Psoas muscle (tissue), 8 donors: ENCODE measurements at regions of chr14 and their contacts with region 1.

Region 1: GRCh38 chr14:50860478-50861086 is 11.3 kb upstream of the ABHD12B start:
- DNase-seq: peak; percentile 75 to 84
- ATAC-seq: peak; percentile 60 to 91 (median 76)
- H3K4me3 ChIP-seq: peak overlapping the region; percentile 77
- H3K27ac ChIP-seq: peak overlapping the region; percentile 83
- H3K4me1 ChIP-seq: peaks cover 20% of the 10 kb centered on the region
- H3K27me3 ChIP-seq: no peaks in the 10 kb centered on the region
- CTCF ChIP-seq: peak; percentile 83

Region 2: GRCh38 chr14:50830932-50831725 is 29.5 kb before region 1 on chr14 and contains the start of gene NIN:
- intact Hi-C with region 1: loop called in 1 of 2 experiments (anchors 2 kb)
- DNase-seq: peak; percentile 82 to 89
- ATAC-seq: peak; percentile 93 to 96 (median 94)
- H3K4me3 ChIP-seq: peak within 1 kb of the TSS; percentile 94
- H3K27ac ChIP-seq: peak within 1 kb of the TSS; percentile 95
- H3K4me1 ChIP-seq: peaks cover 33% of the 10 kb centered on the region
- H3K27me3 ChIP-seq: no peaks in the 10 kb centered on the region
- CTCF ChIP-seq: no peak
- total RNA-seq, gene NIN: 24.3 to 47.7 (median 39.5) TPM

Region 3: DNA sequence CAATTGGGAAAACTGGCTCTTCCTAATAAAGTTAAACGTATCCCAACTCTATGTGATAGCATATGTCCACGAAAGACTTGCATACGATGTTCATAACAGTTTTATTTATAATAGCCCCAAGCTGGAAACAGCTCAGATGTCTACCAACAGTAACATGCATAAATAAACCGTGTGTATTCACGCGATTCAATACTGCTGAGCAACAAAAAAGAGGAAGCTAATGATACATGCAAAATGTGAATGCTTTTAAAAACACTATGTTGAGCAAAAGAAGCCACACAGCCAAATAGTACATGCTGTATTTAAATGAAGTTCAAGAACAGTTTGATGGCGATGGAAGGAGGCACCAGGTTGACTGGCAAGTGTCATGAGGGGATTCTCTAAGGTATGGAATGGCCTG is 178.7 kb after region 1 on chr14:
- intact Hi-C with region 1: no loop called
- DNase-seq: no peak
- ATAC-seq: no peak
- H3K4me3 ChIP-seq: no peak overlapping the region
- H3K27ac ChIP-seq: no peak overlapping the region
- H3K4me1 ChIP-seq: no peaks in the 10 kb centered on the region
- H3K27me3 ChIP-seq: no peaks in the 10 kb centered on the region
- CTCF ChIP-seq: no peak

Region 4: GRCh38 chr14:51094901-51095853 is 234.6 kb after region 1 on chr14 and contains the start of gene TRIM9:
- intact Hi-C with region 1: no loop called
- DNase-seq: peak; percentile 92 to 97
- ATAC-seq: peak; percentile 97 to 99 (median 98)
- H3K4me3 ChIP-seq: peak within 1 kb of the TSS; percentile 75
- H3K27ac ChIP-seq: peak within 1 kb of the TSS; percentile 10
- H3K4me1 ChIP-seq: peaks cover 12% of the 10 kb centered on the region
- H3K27me3 ChIP-seq: peaks cover 0 to 24% (median 12%) of the 10 kb centered on the region in 3 donors
- CTCF ChIP-seq: no peak
- total RNA-seq, gene TRIM9: 0.69 to 1.5 (median 1.2) TPM